ENCODE measurements at regions of chr4 and their contacts with region 1.

Region 1: DNA sequence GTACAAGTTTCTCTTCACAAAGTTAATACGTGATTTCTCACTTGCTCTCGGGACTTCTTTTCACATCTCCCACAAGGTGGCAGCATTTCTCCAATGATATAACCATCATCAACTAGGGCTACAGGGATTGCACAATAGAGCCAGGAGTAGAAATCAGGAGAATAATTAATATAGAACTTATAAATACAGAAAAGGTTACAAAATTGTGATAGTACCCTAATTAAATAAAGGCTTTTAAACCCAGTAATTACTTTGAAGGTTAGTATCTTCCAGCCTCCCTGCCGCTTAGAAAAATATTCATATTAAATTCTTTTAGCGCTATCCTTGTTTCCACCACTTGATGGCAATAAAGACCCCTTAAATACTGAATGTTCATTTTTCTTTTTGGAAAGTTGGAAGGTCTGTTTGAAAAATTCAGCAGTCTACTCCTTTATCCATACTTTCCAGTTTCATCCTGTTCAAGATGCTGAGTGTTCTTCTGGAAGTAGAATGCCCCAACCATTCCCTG is 65.8 kb downstream of the RASGEF1B start:
- DNase-seq: peak in 1 of 2 donors; percentile 64
- ATAC-seq: peak in 7 of 8 donors; percentile 73 to 87 (median 79)
- H3K4me3 ChIP-seq: peak overlapping the region in 4 of 10 donors; percentile 4 to 26 (median 15)
- H3K27ac ChIP-seq: no peak overlapping the region
- H3K4me1 ChIP-seq: peaks cover 0 to 9% (median 0%) of the 10 kb centered on the region in 9 donors
- H3K27me3 ChIP-seq: no peaks in the 10 kb centered on the region
- CTCF ChIP-seq: peak; percentile 60 to 88 (median 82)

Region 2: GRCh38 chr4:81505004-81505598 is 99.2 kb after region 1 on chr4:
- intact Hi-C with region 1: no loop called
- DNase-seq: peak; percentile 48 to 60
- ATAC-seq: peak; percentile 50 to 91 (median 84)
- H3K4me3 ChIP-seq: peak overlapping the region in 4 of 10 donors; percentile 0 to 14 (median 12)
- H3K27ac ChIP-seq: peak overlapping the region; percentile 22 to 81 (median 57)
- H3K4me1 ChIP-seq: peaks cover 0 to 52% (median 7%) of the 10 kb centered on the region in 9 donors
- H3K27me3 ChIP-seq: no peaks in the 10 kb centered on the region
- CTCF ChIP-seq: peak in 2 of 9 donors; percentile 5 to 16

Region 3: GRCh38 chr4:81844717-81845116 is 438.8 kb after region 1 on chr4:
- intact Hi-C with region 1: loop called in 8 of 10 experiments (anchors 2 to 10 kb)
- DNase-seq: peak in 1 of 2 donors; percentile 69
- ATAC-seq: peak; percentile 71 to 92 (median 87)
- H3K4me3 ChIP-seq: no peak overlapping the region
- H3K27ac ChIP-seq: no peak overlapping the region
- H3K4me1 ChIP-seq: peaks cover 0 to 10% (median 0%) of the 10 kb centered on the region in 9 donors
- H3K27me3 ChIP-seq: no peaks in the 10 kb centered on the region
- CTCF ChIP-seq: peak; percentile 62 to 90 (median 81)

Region 4: DNA sequence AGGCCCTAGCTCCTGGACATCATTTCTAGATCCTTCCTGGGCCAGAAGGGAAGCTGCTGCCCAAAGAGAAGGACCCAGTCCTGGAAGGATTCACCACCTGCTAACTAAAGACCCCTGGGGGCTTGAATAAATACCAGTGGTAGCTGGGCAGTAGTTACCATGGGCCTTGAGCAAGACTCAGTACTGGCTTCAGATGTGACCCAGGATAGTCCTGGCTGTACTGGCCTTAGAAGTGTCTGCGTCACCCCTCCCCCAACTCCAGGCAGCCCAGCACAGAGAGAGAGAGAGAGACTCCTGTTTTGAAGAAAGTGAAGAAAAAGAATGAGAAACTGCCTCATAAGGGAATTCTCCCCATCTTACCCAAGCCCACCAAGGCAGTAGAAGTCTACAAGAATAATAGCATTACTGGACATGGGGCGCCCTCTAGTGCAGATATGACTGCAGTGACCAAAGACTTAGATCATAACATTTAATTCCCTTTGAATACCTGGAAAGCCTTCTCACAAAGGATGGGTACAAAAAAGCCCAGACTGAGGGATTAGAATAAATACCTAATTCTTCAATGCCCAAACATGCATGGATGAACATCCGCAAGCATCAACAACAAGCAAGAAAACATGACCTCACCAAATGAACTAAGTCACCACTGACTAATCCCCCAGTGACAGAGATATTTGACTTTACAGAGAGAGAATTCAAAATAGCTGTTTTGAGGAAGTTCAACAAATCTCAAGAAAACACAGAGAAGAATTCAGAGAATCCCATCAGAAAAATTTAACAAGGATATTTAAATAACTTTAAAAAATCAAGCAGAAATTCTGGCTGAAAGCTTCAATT is 796.1 kb after region 1 on chr4:
- intact Hi-C with region 1: loop called (anchors 2 to 10 kb)
- DNase-seq: peak in 1 of 2 donors; percentile 22
- ATAC-seq: no peak
- H3K4me3 ChIP-seq: no peak overlapping the region
- H3K27ac ChIP-seq: no peak overlapping the region
- H3K4me1 ChIP-seq: no peaks in the 10 kb centered on the region
- H3K27me3 ChIP-seq: no peaks in the 10 kb centered on the region
- CTCF ChIP-seq: peak in 8 of 9 donors; percentile 30 to 67 (median 55)

Region 5: DNA sequence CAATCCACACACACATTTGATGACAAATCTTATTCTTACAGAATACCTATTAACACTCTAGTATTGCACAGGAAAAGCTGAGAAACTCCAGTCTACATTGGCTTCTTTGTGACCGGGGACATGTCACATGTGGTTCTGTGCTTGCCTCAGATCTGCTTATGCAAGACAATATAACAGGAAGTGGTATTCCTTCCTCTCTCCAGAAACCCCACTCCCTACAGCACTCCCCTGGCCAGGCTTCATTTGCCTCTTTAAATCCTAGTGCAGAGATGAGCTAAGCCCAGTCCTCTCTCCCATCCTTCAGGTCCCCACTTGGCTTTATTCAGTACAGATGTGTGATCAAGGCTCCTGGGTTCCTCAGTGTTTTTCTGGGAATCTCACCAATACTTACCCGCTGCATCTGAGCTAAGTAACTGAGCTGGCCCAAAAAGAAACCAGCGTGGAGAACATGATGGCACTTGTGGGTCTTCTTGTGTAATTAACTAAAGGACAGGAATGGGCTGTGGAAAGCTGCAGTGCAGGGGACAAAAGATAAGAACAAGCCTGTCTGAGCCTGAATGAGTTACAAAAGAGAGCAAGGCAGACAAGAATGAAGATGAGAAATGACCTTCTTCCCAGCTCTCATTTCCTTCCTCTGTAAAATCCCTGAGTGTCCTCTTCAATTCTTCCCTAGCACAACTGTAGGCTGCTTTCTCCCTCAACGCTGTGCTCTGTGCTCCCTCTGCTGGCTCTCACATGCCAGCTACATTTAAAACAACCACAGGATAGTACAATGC is 862.3 kb after region 1 on chr4:
- intact Hi-C with region 1: loop called (anchors 1 to 10 kb)
- DNase-seq: peak; percentile 23 to 51
- ATAC-seq: peak; percentile 80 to 96 (median 94)
- H3K4me3 ChIP-seq: peak overlapping the region in 2 of 10 donors; percentile 10 to 13
- H3K27ac ChIP-seq: peak overlapping the region in 2 of 10 donors; percentile 14 to 50
- H3K4me1 ChIP-seq: peaks cover 0 to 14% (median 0%) of the 10 kb centered on the region in 9 donors
- H3K27me3 ChIP-seq: peaks cover 0 to 5% (median 0%) of the 10 kb centered on the region in 7 donors
- CTCF ChIP-seq: peak; percentile 43 to 81 (median 76)

Region 6: DNA sequence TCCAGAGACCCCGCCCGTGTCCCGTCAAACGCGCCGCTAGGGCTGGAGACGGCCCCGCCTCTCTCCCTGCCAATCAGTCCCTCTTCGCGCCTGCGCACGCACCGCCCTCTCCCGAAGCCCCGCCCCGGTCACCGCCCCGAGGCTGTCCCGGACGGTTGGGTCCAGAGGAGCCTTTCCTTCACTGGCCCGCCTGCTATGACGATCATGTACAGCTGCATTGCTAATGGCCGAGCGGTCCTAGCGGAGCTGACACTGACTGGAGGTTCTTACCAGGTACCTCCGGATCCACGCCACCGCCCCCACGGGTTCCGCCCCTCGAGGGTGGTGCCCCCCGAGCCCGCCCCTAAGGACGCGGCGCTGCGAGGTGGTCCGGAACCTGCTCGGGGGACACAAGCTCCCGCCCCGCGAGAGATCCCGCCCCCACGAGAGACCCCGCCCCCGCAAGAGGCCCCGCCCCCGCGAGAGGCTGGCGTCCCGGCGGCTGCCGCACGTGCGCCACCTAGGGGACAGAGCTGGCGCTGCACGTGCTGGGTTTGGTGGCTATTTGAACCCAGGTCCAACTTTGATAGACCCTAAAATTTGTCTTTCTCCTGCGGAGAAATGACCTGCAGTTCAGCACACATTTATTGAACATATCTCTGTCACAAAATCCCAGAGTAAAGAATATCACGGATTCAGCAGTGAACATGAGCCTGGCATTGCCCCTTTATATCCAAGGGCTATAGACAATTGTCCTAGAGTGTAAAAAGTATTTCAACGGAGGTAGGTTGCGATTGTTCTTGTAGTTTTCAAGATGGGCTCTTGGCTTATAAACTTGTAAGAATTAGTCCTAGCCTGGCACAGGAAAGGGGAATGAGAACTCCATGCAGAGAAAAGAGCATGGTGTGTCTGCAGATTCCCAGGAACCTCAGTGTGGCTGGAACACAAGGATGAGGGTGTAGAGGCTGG is 879.2 kb after region 1 on chr4:
- intact Hi-C with region 1: loop called in 1 of 10 experiments (anchors 5 kb)
- DNase-seq: peak; percentile 99
- ATAC-seq: peak; percentile 99 to 100 (median 100)
- H3K4me3 ChIP-seq: peak overlapping the region in 9 of 10 donors; percentile 29 to 65 (median 51)
- H3K27ac ChIP-seq: peak overlapping the region in 8 of 10 donors; percentile 6 to 68 (median 48)
- H3K4me1 ChIP-seq: peaks cover 0 to 10% (median 4%) of the 10 kb centered on the region in 9 donors
- H3K27me3 ChIP-seq: no peaks in the 10 kb centered on the region
- CTCF ChIP-seq: peak; percentile 90 to 98 (median 96)

Measured in heart right ventricle (tissue), 16 donors.